ENCODE measurements at regions of chr6 and their contacts with region 1.

Region 1: DNA sequence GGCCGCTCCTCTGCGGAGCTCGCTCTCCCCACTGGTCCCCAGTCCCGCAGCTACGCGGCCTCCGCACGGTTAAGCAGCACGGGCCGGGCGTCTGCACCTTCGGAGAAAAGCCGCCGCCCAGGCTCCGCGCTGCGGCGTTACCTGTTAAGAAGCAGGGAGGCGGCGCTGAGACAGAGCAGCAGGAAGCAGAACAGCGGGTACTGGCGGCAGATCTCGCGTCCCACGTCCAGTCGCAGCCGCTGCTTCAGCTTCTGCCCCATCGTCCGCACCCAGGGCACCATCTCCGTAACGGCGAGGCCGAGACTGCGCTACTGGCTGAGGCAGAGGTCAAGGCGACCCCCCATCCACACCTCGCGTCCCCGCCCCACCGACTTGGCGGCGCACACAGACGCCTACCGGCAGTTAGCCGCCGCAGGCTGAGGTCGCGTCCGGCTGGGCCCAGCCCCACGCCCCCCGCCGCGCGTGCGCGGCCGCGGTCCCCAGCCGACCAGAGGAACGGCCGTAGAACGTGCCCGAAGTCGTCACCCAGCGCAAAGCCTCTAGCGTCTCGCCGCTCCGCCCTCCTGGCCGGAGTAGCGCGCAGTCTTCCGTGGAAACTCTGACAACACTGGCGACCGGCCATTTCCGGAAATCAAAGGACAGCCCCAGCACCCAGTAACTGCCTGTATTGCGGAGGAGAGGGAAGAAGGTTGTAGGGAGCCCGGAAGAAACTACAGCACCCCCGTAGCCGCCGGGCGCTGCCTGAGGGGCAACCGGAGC is at the start of gene SNX14:
- DNase-seq: peak; percentile 95 to 97
- ATAC-seq: peak; percentile 97 to 99 (median 98)
- H3K4me3 ChIP-seq: peak within 1 kb of the TSS; percentile 66 to 97 (median 83)
- H3K27ac ChIP-seq: peak within 1 kb of the TSS; percentile 82 to 99 (median 97)
- H3K4me1 ChIP-seq: peaks cover 0 to 32% (median 27%) of the 10 kb centered on the region in 9 donors
- H3K27me3 ChIP-seq: no peaks in the 10 kb centered on the region
- CTCF ChIP-seq: peak in 4 of 9 donors; percentile 24 to 39 (median 32)
- total RNA-seq, gene SNX14: 21.3 to 38.1 (median 27.1) TPM

Region 2: DNA sequence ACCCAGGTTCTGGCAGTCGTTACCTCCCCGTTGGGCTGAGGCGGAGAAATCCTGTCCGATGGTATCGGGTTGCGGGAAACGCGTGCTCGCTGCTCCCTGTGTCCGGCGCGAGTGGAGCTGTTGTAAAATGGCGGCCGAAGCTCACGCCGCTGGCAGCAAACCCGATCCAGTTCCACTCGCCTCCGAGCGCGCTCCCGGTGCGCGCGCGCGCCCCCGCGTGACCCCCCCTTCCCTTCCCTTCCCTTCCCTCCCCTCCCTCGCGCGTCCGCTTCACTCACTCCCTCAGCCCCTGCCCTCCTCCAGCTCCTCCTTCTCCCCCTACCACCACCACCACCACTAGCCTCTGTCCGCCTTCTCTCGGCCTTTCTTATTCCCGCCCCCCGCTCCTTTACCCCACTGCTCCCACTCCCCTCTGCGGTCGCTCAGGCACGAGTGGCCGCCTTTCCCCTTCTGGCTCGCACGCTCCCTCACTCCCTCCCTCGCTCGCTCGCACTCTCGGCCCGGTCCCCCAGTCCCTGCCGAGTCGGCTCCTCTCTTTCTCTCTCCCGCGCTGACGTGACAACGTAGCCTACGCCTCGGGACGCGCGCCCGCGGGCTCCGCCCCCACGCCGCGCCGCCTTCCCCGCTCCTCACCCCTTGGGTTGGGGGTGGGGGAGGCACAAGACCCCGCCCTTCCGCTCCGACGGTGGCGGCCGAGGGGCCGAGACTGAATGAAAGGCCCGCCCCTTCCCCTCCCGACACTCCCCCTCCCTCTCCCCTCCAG is 49.3 kb after region 1 on chr6 and contains the start of gene SYNCRIP:
- intact Hi-C with region 1: loop called in 8 of 10 experiments (anchors 1 to 5 kb)
- DNase-seq: peak; percentile 99
- ATAC-seq: peak; percentile 88 to 96 (median 92)
- H3K4me3 ChIP-seq: peak within 1 kb of the TSS; percentile 78 to 99 (median 95)
- H3K27ac ChIP-seq: peak within 1 kb of the TSS; percentile 97 to 100 (median 100)
- H3K4me1 ChIP-seq: peaks cover 4 to 50% (median 42%) of the 10 kb centered on the region in 9 donors
- H3K27me3 ChIP-seq: no peaks in the 10 kb centered on the region
- CTCF ChIP-seq: no peak
- total RNA-seq, gene SYNCRIP: 56.1 to 72.6 (median 61.2) TPM

Measured in heart right ventricle (tissue), 16 donors.